ENCODE measurements at regions of chr2 and their contacts with region 1.

Region 1: DNA sequence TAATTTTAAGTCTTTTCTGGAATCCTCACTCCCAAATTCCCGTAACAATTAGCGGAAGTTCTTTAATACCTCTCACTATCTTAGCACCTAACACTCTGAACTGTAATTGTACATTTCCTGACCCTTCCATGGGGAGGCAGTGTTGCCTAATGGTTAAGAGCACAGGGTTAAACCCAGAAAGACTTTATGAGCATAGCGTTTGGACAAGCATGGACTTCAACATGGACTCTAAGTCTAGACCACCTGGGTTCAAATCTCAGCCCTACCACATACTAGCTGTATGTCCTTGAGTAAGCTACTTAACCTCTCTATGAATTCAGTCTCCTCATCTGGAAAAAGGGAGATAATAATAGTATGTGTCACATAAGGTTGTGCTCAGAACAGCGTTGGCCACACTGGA is 13.0 kb downstream of the ANTXR1 start:
- DNase-seq: peak; percentile 54
- H3K4me3 ChIP-seq: no peak overlapping the region
- H3K27ac ChIP-seq: no peak overlapping the region
- H3K4me1 ChIP-seq: peaks cover 16% of the 10 kb centered on the region
- H3K27me3 ChIP-seq: no peaks in the 10 kb centered on the region
- CTCF ChIP-seq: peak; percentile 71 to 77

Region 2: DNA sequence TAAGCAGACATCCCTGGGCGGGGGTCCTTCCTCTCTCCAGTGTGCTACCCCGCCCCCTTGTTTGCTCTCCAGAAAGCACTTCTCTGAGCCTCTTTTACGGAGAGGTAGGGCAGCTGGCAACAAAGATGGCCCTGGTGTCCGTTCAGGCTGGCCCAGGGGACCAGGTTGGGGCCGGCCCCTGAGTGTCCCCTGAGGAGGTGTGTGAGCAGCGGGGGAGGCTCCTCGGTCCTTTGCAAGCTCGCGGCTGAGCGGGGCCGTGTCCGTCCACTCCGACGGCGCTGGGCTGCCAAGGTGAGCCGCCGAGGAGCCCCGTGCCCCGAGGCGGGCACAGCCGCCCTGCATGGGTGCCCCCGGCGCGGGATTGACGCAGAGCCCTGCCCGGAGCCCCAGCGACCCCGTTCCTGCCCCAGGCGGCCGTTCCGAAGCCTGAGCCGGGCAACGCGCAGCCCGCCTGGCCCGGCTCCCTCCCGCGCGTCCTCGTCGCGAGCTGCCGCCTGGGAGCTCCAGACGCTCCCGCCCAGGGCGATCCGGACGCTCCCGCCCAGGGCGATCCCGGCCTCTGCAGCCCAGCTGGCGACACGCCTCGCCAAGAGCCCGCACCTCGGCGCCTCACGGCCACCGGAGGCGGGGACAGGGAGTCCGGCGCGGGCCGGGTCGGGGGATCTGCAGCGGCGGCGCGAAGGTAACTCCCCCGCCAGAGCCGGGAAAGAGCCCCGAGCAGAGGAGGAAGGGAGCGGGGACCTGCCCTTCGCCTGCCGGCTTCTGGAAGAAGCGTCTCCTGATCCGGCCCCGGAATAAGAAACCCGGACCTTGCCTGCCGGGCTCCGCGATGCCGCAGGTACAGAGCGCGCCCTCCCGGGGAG is 382.8 kb before region 1 on chr2 and contains the start of gene PROKR1:
- CTCF ChIA-PET with region 1: no interaction called
- dilution Hi-C with region 1: no loop called
- in situ Hi-C with region 1: no loop called
- intact Hi-C with region 1: no loop called
- DNase-seq: peak; percentile 24
- H3K4me3 ChIP-seq: peak within 1 kb of the TSS; percentile 36 to 50 (median 44)
- H3K27ac ChIP-seq: no peak within 1 kb of the TSS
- H3K4me1 ChIP-seq: peaks cover 9% of the 10 kb centered on the region
- H3K27me3 ChIP-seq: peaks cover 17% of the 10 kb centered on the region
- CTCF ChIP-seq: no peak
- total RNA-seq, gene PROKR1: not detected

Region 3: GRCh38 chr2:68943581-68944568 is 82.2 kb before region 1 on chr2:
- CTCF ChIA-PET with region 1: no interaction called
- dilution Hi-C with region 1: no loop called
- in situ Hi-C with region 1: no loop called
- intact Hi-C with region 1: loop called (anchors 2 kb)
- DNase-seq: peak; percentile 61
- H3K4me3 ChIP-seq: no peak overlapping the region
- H3K27ac ChIP-seq: no peak overlapping the region
- H3K4me1 ChIP-seq: no peaks in the 10 kb centered on the region
- H3K27me3 ChIP-seq: no peaks in the 10 kb centered on the region
- CTCF ChIP-seq: peak; percentile 63 to 84

Region 4: DNA sequence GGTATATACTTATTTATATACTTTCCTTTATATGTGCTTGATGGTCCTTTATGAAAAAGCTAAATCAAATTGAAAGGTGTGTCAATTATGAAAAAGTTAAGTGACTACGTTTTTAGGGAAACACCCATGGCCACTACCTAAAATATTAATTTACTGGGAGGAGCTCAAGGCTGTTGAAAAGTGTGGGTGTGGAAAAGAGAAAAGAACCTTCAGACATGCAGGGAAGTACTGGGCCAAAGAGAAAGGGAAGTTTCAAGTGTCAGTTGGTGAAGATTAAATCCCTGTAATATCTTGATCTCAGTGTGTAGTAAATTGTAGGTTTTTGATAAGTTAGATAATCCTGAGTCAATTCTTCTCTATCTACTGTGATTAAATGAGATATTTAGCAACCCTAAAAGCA is 57.8 kb before region 1 on chr2:
- CTCF ChIA-PET with region 1: no interaction called
- dilution Hi-C with region 1: no loop called
- in situ Hi-C with region 1: no loop called
- intact Hi-C with region 1: no loop called
- DNase-seq: no peak
- H3K4me3 ChIP-seq: no peak overlapping the region
- H3K27ac ChIP-seq: no peak overlapping the region
- H3K4me1 ChIP-seq: peaks cover 26% of the 10 kb centered on the region
- H3K27me3 ChIP-seq: no peaks in the 10 kb centered on the region
- CTCF ChIP-seq: no peak

Region 5: GRCh38 chr2:69138793-69139510 is 112.9 kb after region 1 on chr2:
- CTCF ChIA-PET with region 1: no interaction called
- dilution Hi-C with region 1: no loop called
- in situ Hi-C with region 1: loop called in 1 of 2 experiments (anchors 10 kb)
- intact Hi-C with region 1: loop called (anchors 5 kb)
- DNase-seq: peak; percentile 81
- H3K4me3 ChIP-seq: no peak overlapping the region
- H3K27ac ChIP-seq: peak overlapping the region; percentile 64
- H3K4me1 ChIP-seq: peaks cover 32% of the 10 kb centered on the region
- H3K27me3 ChIP-seq: no peaks in the 10 kb centered on the region
- CTCF ChIP-seq: peak in 1 of 2 donors; percentile 3

Measured in mammary epithelial cell (primary cell).